Activated CD4-positive, alpha-beta T cell treated with anti-CD3 and anti-CD28 coated beads, Interleukin-2, amount 10 ng/mL, durations not matched to agents 24 days and 14 days (primary cell): ENCODE measurements at regions of chr3 and their contacts with region 1.

Region 1: GRCh38 chr3:43378066-43378935 is 92.0 kb downstream of the SNRK start:
- DNase-seq: peak; percentile 91
- H3K4me3 Mint-ChIP-seq: no peak overlapping the region
- H3K27ac Mint-ChIP-seq: no peak overlapping the region
- H3K4me1 Mint-ChIP-seq: peaks cover 8% of the 10 kb centered on the region
- H3K27me3 Mint-ChIP-seq: peaks cover 2% of the 10 kb centered on the region

Region 2: GRCh38 chr3:43162230-43163084 is 215.8 kb before region 1 on chr3:
- intact Hi-C with region 1: loop called (anchors 1 kb)
- DNase-seq: peak; percentile 89
- H3K4me3 Mint-ChIP-seq: peak overlapping the region; percentile 79
- H3K27ac Mint-ChIP-seq: peak overlapping the region; percentile 91
- H3K4me1 Mint-ChIP-seq: peaks cover 18% of the 10 kb centered on the region
- H3K27me3 Mint-ChIP-seq: peaks cover 2% of the 10 kb centered on the region

Region 3: DNA sequence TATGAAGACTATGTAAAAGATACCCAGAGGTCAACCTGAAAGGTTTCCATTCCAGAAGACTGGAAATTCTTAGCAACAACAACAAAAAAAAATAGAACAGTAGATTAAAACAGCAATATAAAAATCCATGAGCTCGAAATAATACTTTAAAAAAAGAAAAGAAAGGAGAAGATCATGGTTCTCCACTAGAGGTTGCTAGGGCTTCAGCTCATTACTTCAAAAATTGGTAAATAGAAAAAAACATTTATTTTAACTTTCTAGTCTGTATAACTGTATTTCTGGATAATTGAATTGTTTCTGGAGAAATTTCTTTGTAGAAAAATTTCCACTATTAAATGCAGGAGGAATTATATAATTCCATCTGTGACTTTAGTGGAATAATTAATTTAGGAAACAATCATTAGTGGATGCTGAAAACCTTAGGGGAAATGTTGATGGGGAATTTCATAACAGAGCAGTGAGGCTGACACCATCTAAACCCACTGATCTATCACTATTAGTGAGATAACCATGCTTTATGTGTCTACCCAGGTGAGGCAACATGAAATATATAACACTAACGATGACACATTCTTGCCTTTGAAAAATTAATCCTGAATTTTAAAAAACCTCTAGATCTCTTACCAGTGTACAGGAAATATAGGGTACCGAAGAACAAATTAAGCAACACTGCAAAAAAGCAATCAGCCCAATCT is 154.5 kb before region 1 on chr3:
- intact Hi-C with region 1: loop called (anchors 2 kb)
- DNase-seq: no peak
- H3K4me3 Mint-ChIP-seq: no peak overlapping the region
- H3K27ac Mint-ChIP-seq: no peak overlapping the region
- H3K4me1 Mint-ChIP-seq: peaks cover 29% of the 10 kb centered on the region
- H3K27me3 Mint-ChIP-seq: peaks cover 2% of the 10 kb centered on the region